ENCODE measurements at regions of chr13 and their contacts with region 1.

Region 1: GRCh38 chr13:27259831-27260230 is 8.5 kb downstream of the RPL21 start:
- DNase-seq: no peak
- H3K4me3 Mint-ChIP-seq: no peak overlapping the region
- H3K27ac Mint-ChIP-seq: peak overlapping the region; percentile 14
- H3K4me1 Mint-ChIP-seq: peaks cover 38% of the 10 kb centered on the region
- H3K27me3 Mint-ChIP-seq: no peaks in the 10 kb centered on the region

Region 2: GRCh38 chr13:26518451-26518959 is 741.3 kb before region 1 on chr13:
- intact Hi-C with region 1: no loop called
- DNase-seq: no peak
- H3K4me3 Mint-ChIP-seq: no peak overlapping the region
- H3K27ac Mint-ChIP-seq: no peak overlapping the region
- H3K4me1 Mint-ChIP-seq: no peaks in the 10 kb centered on the region
- H3K27me3 Mint-ChIP-seq: peaks cover 2% of the 10 kb centered on the region

Region 3: GRCh38 chr13:27035982-27036981 is 223.5 kb before region 1 on chr13:
- intact Hi-C with region 1: no loop called
- DNase-seq: no peak
- H3K4me3 Mint-ChIP-seq: no peak overlapping the region
- H3K27ac Mint-ChIP-seq: no peak overlapping the region
- H3K4me1 Mint-ChIP-seq: no peaks in the 10 kb centered on the region
- H3K27me3 Mint-ChIP-seq: peaks cover 9% of the 10 kb centered on the region

Region 4: GRCh38 chr13:27270594-27271520 is 11.0 kb after region 1 on chr13 and contains the start of gene RASL11A:
- intact Hi-C with region 1: loop called (anchors 1 kb)
- DNase-seq: peak; percentile 63
- H3K4me3 Mint-ChIP-seq: peak within 1 kb of the TSS; percentile 89
- H3K27ac Mint-ChIP-seq: peak within 1 kb of the TSS; percentile 24
- H3K4me1 Mint-ChIP-seq: peaks cover 11% of the 10 kb centered on the region
- H3K27me3 Mint-ChIP-seq: peaks cover 40% of the 10 kb centered on the region
- total RNA-seq, gene RASL11A: 1.9 and 3.2 TPM in 2 replicates

Region 5: DNA sequence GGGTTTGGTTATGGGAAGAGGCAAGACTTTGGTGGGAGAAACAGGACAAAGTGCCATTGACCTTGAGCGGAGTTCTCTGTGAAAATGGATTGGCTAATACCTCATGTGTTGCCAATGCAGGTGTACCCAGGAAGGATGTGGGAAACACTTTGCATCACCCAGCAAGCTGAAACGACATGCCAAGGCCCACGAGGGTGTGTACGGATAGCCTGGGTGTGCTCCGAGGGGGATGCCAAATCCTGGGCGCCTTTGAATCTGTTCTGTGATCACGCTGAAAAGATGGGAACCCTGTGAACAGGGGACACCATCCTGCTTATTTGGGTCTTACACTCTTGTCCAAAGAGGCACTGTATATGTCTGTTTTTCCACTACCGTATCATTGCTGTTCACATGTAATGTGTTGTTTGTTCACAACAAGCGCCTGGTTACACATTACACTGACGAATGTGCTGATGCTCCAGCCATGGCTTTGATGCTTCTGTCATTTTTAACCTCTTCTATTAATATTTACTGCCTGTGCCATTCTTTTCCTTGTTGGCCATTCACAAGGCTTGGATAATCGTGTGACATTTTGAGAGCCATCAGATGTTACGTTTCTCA is 172.9 kb after region 1 on chr13:
- intact Hi-C with region 1: no loop called
- DNase-seq: no peak
- H3K4me3 Mint-ChIP-seq: no peak overlapping the region
- H3K27ac Mint-ChIP-seq: no peak overlapping the region
- H3K4me1 Mint-ChIP-seq: peaks cover 46% of the 10 kb centered on the region
- H3K27me3 Mint-ChIP-seq: no peaks in the 10 kb centered on the region

Region 6: GRCh38 chr13:27770809-27771208 is 511.0 kb after region 1 on chr13:
- intact Hi-C with region 1: no loop called
- DNase-seq: no peak
- H3K4me3 Mint-ChIP-seq: no peak overlapping the region
- H3K27ac Mint-ChIP-seq: no peak overlapping the region
- H3K4me1 Mint-ChIP-seq: no peaks in the 10 kb centered on the region
- H3K27me3 Mint-ChIP-seq: peaks cover 3% of the 10 kb centered on the region